ENCODE measurements at regions of chr21 and their contacts with region 1.

Region 1: DNA sequence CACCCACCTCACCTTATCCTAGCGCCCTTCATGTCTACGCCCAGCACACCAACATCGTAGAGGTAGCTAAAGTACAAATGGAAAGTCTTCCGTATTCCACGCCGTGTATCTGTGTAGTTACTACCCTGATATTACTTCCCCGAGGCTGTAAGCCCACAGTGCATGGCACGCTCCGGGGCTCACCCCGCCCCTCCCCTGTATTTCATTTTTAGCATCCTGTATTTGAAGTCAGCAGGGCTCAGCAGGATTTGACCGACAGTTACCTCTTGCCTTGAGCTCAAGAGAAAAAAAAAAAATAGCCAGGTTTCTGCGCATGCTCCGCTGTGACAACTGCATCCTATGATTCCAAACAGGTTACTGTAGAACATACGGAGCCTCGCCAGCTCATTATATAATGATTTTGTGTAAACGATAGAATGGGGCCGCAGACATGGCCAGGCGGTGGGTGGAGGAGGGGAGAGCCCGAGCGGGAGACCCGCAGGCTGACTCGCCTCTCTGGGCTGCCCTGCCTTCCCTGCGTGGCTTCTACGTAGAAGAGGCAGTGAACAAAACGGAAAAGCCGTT is 1.3 kb downstream of the ABCG1 start:
- DNase-seq: peak; percentile 79
- H3K4me3 Mint-ChIP-seq: peak overlapping the region; percentile 82
- H3K27ac Mint-ChIP-seq: peak overlapping the region; percentile 84
- H3K4me1 Mint-ChIP-seq: peaks cover 15% of the 10 kb centered on the region
- H3K27me3 Mint-ChIP-seq: peaks cover 4% of the 10 kb centered on the region

Region 2: DNA sequence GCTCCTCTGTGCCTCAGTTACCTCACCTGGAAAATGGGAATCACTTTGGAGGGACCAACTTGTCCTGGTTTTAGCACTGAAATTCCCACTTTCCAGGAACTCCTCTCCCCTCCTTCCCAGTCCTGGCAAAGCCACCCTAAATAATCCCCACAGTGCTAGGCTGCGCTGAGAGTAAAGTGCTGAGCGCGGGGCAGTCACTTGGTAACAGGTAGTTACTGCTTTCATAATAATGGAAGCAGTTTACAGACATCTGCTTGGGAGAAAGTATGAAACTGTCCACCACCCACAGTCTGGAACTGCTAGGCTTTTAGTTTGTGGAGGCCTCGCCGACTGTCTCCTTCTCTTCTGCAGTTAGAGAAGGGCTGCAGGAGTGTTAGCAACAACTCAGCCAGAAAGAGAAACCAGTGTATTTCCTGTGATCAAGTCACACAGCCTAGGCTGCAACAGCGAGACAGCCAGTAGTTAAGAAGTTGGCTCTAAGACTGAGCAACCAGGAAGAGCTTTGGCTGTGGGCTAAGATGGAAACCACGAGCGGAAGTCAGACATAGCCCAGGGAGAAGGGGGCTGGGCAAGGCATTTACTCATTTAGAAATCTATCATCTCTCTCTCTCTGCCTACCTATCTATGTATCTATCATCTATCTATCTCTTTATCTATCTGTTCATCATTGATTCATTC is 32.1 kb before region 1 on chr21:
- CTCF ChIA-PET with region 1: interaction called, 18 read pairs
- POLR2A ChIA-PET with region 1: interaction called, 66 read pairs
- DNase-seq: peak; percentile 90
- H3K4me3 Mint-ChIP-seq: peak overlapping the region; percentile 28
- H3K27ac Mint-ChIP-seq: peak overlapping the region; percentile 95
- H3K4me1 Mint-ChIP-seq: peaks cover 71% of the 10 kb centered on the region
- H3K27me3 Mint-ChIP-seq: peaks cover 10% of the 10 kb centered on the region

Region 3: DNA sequence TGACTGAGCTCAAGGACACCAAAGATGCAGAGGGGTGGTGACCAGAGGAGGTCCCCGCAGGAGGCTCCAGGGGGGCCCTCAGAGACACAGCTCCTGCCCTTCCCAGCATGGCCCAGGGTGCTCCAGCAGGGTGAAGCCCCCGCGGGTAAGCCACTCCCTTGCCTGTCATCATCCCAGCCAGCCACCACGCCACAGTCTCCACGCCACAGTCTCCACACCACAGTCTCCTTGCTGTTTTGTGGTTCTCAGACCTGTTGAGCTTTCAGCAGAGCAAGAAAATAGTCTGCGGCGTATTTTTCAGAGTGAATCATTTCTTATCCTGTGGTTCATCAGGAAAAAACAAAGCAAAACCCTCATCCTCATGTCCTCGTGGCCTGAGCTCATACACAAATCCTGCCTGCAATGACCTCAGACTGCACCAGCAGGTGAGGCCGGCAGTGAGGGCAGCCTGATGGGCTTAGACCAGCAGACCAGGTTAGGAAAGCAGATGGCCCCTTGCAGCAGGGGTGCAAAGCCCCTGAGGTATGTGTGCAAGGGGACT is 27.0 kb before region 1 on chr21:
- CTCF ChIA-PET with region 1: interaction called, 18 read pairs
- POLR2A ChIA-PET with region 1: interaction called, 66 read pairs
- DNase-seq: peak; percentile 89
- H3K4me3 Mint-ChIP-seq: peak overlapping the region; percentile 12
- H3K27ac Mint-ChIP-seq: peak overlapping the region; percentile 70
- H3K4me1 Mint-ChIP-seq: peaks cover 72% of the 10 kb centered on the region
- H3K27me3 Mint-ChIP-seq: peaks cover 15% of the 10 kb centered on the region

Region 4: DNA sequence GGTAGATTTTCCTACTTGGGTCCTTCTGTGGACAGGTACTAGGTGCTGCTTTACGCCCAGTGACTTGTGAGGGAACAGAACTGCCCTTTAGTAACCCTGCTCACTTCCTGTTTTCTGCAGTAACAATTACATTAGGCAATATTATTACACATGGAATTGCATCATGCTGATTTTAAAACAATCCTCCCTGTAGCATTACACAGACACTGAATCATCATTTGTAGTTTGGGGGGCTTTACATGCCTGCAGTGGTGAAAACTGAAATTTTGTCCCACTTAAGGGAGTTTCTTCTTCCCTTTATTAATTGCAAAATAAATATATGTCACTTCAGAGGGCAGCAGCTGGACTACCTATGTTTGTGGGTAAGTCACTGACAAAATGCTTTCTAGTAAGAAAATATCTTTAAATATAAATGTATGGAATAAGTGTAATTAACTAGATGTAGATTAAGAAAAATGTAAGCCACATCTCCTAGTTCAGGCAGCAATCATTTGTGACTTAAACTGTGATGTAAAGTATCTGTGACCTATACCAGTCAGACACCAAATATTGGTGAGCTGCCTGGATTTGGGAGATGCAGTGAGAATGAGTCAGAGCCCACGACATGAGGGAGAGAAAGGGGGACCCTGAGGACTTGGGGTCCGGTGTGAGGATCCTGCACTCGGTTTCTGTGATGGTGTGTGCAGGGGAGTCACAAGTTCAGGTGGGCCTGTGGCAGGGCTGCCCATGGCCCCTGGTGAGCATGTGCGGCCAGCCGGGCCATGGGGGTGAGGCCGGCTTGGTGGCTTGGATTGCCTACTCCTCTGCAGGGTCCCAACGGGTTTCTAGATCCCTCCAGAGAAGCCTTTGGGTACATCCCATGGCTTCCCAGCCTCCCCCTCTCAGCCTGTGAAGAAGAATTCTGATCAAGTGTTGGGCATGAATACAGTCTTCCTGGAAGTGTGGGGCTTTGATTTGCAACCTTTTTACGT is 20.4 kb before region 1 on chr21:
- CTCF ChIA-PET with region 1: interaction called, 18 read pairs
- POLR2A ChIA-PET with region 1: interaction called, 35 read pairs
- DNase-seq: peak; percentile 19
- H3K4me3 Mint-ChIP-seq: no peak overlapping the region
- H3K27ac Mint-ChIP-seq: peak overlapping the region; percentile 60
- H3K4me1 Mint-ChIP-seq: peaks cover 34% of the 10 kb centered on the region
- H3K27me3 Mint-ChIP-seq: peaks cover 10% of the 10 kb centered on the region

Region 5: DNA sequence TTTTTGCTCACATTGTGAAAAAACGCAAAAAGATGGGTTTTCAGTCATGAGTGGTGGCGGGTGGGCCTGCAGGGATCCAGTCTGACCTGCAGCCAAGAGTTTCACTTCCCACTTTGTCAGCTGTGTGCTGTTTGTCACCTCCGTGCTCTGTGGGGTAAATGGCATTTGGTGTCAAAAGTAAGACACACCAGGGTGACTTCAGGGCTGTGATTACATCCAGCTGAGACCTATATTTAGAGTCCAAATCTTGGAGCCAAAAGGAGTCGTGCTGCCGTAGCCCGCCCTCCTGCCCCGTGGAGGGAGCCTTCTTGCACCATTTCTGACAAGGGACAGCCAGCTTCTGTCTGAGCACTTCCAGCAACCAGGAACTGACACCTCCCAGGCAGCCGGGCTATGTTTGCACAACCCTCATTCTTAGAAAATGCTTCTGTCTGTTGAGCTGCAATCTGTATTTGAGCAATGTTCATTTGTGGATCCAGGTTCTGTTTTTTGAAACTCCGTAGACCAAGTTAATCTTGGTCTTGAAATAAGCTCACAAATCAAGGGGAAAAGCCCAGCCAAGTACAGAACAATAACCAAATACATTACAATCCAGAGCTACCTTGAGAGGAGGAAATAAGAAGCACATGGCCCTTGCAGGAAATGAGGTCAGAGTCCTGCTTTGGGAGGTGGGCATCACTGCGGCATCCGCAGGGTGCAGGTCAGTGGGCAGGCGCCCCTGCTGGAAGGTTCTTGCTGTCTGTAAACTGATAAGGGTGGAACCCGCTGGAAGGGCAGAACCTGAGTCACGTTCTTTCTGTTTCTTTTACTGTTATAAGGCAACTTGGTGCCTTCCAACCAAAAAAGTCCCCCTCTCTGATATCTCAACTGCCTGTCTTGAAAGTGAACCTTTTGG is 13.1 kb after region 1 on chr21:
- CTCF ChIA-PET with region 1: interaction called, 44 read pairs
- POLR2A ChIA-PET with region 1: interaction called, 156 read pairs
- DNase-seq: peak; percentile 87
- H3K4me3 Mint-ChIP-seq: peak overlapping the region; percentile 33
- H3K27ac Mint-ChIP-seq: peak overlapping the region; percentile 94
- H3K4me1 Mint-ChIP-seq: peaks cover 96% of the 10 kb centered on the region
- H3K27me3 Mint-ChIP-seq: no peaks in the 10 kb centered on the region

Region 6: GRCh38 chr21:42400525-42400924 is 180.3 kb after region 1 on chr21:
- CTCF ChIA-PET with region 1: no interaction called
- POLR2A ChIA-PET with region 1: interaction called, 12 read pairs
- DNase-seq: no peak
- H3K4me3 Mint-ChIP-seq: no peak overlapping the region
- H3K27ac Mint-ChIP-seq: peak overlapping the region; percentile 29
- H3K4me1 Mint-ChIP-seq: peaks cover 53% of the 10 kb centered on the region
- H3K27me3 Mint-ChIP-seq: no peaks in the 10 kb centered on the region

Measured in activated CD4-positive, alpha-beta memory T cell treated with anti-CD3 and anti-CD28 coated beads, Interleukin-2, amount 10 ng/mL, durations not matched to agents 7 days and 5 days (primary cell).